CD8-positive, alpha-beta T cell (primary cell): ENCODE measurements at regions of chr11 and their contacts with region 1.

Region 1: GRCh38 chr11:37642296-37642695 is 1044.3 kb upstream of the RAG2 start:
- DNase-seq: no peak
- ATAC-seq: no peak
- H3K4me3 ChIP-seq: no peak overlapping the region
- H3K4me3 Mint-ChIP-seq: no peak overlapping the region
- H3K27ac ChIP-seq: no peak overlapping the region
- H3K27ac Mint-ChIP-seq: no peak overlapping the region
- H3K4me1 ChIP-seq: no peaks in the 10 kb centered on the region
- H3K4me1 Mint-ChIP-seq: no peaks in the 10 kb centered on the region
- H3K27me3 ChIP-seq: no peaks in the 10 kb centered on the region
- H3K27me3 Mint-ChIP-seq: no peaks in the 10 kb centered on the region
- CTCF ChIP-seq: no peak

Region 2: GRCh38 chr11:37605224-37605623 is 37.1 kb before region 1 on chr11:
- CTCF ChIA-PET with region 1: no interaction called
- POLR2A ChIA-PET with region 1: no interaction called
- intact Hi-C with region 1: no loop called
- DNase-seq: no peak
- ATAC-seq: no peak
- H3K4me3 ChIP-seq: no peak overlapping the region
- H3K4me3 Mint-ChIP-seq: no peak overlapping the region
- H3K27ac ChIP-seq: no peak overlapping the region
- H3K27ac Mint-ChIP-seq: no peak overlapping the region
- H3K4me1 ChIP-seq: no peaks in the 10 kb centered on the region
- H3K4me1 Mint-ChIP-seq: no peaks in the 10 kb centered on the region
- H3K27me3 ChIP-seq: no peaks in the 10 kb centered on the region
- H3K27me3 Mint-ChIP-seq: no peaks in the 10 kb centered on the region
- CTCF ChIP-seq: no peak

Region 3: DNA sequence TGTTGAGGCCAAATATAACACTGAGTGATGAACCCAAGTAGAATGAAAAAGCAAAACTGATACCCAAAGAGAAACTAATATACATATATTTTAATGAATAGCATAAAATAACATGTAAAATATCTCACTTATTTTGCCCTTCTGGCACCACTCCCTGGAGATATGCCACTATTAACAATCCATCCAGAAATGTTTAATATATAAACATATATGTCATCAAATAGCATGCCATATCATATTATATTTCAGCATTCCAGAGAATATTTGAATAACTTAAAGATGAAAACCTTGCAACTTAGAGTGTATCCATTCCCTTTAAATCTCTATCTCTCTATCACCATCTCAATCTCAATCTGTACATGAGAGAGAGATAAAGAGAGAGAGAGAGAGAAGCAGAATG is 29.0 kb after region 1 on chr11:
- CTCF ChIA-PET with region 1: no interaction called
- POLR2A ChIA-PET with region 1: no interaction called
- intact Hi-C with region 1: loop called in 1 of 2 experiments (anchors 1 kb)
- DNase-seq: no peak
- ATAC-seq: no peak
- H3K4me3 ChIP-seq: no peak overlapping the region
- H3K4me3 Mint-ChIP-seq: no peak overlapping the region
- H3K27ac ChIP-seq: no peak overlapping the region
- H3K27ac Mint-ChIP-seq: no peak overlapping the region
- H3K4me1 ChIP-seq: no peaks in the 10 kb centered on the region
- H3K4me1 Mint-ChIP-seq: no peaks in the 10 kb centered on the region
- H3K27me3 ChIP-seq: no peaks in the 10 kb centered on the region
- H3K27me3 Mint-ChIP-seq: no peaks in the 10 kb centered on the region
- CTCF ChIP-seq: no peak